Right ventricle myocardium inferior (tissue), 1 donor: ENCODE measurements at regions of chr19 and their contacts with region 1.

Region 1: DNA sequence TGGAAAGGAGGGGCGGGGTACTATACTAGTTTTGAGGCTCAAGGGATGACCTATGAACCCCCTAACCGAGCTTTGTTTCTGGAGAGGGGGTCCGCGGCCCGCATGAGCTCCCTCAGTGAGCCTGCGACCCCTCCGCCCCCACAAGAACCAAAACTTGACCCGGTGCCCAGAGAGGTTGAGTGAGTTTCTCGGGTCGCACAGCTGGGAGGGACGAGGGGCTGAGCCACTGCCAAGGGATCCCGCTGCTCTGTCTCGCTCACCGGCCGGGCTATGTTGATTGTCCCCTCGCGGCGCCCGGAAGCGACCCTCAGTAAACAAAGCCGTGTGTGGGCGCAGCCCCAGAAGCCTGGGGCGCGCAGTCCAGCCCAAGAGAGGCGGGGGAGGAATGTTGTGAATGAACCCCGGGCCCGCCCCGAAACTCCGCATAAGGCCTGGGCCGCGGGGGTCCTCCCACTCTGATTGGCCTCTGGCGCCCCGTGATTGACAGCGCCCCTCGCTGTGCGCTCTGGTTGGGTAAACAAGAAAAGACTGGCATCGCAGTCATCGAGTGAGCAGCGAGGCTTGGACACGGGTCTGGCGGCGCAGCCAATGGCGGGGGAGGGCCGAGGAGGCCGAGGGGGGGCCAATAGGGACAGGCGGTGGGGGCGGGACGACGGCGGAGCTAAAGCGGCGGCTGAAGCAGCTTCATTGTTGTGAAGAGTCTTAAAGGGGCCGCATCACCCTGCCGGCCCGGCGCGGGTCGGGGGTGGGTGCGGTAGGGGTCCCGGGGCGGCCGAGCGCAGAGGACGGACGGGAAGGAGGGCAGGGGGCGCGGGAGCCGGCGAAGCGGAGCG is at the start of gene ZSWIM4:
- DNase-seq: peak; percentile 100
- ATAC-seq: peak; percentile 97
- total RNA-seq, gene ZSWIM4: 2.1 TPM

Region 2: DNA sequence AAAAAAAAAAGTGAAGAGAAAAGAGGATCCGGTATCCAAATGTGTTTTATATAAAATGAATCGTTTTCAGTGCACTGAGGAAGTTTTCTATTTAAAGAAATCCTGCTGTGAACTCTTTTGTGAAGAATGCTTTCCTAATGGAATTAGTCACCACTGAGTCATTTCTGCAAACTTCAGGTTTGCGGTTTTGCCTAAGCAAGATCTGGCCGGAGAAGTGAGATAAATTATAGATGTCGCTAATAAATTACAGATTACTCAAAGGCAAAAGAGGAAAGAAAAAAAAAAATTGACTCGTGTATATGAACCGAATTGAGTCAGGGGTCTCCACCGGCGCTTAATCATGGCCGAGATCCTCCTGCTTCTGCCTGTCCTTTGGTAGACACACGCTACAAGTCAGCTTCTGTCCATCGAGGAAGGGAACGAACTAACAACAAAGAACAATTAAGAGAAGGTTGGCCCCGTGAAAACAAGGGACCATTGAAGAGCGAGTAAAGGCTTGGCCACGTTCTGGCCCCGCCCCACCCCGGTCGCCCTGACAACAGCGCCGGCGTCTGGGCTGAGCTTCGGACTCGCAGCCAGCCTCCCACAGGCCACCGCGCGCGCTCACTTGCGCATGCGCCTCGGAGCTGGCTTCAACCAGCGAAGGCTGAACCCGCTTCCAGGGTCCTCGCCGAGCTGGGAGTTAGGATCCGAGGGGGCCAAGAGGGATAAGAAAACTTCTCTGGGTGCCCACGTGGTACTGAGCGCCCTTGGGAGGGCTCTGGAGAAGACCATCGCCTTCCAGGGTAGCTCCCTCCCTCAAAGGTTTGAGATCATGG is 63.6 kb before region 1 on chr19:
- intact Hi-C with region 1: no loop called
- DNase-seq: peak; percentile 98
- ATAC-seq: peak; percentile 100

Region 3: DNA sequence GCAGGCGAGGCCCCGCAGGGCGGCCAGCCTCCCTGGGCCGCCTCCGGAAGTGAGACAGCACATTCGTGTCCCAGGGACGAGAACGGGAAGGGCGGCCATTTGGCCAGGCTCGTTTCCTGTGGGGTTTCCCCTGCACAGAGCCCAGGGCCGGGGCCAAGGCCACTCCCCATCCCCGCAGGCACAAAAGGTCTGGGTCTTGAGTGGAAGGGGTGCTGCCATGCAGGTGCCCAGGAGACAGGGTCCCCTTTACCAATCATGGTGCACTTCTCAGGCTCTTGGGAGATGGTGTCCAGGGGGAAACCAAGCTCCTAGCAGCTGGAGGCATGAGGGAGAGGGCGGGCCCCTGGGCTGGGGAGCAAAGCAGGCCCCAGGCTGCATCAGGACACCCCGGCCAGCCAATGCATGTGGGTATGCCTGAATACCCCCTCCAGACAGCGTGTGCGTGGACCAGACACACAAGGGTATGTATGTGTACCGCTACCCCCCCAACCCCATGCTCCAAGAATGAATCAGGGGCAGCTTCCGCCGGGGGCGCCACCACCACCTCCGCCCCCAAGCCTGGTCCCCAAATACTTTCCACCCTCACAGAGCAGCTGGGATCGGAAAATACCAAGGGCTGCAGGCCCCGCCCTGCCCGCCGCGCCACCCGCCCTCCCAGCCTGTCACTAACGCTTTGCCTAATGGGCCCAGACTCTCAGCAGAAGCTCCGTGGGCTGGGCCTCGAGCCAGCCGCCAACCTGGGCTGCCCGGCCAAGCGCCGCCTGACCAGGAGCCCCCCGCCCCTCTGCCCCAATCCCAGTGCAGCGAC is 44.4 kb after region 1 on chr19:
- intact Hi-C with region 1: loop called (anchors 5 kb)
- DNase-seq: peak; percentile 98
- ATAC-seq: peak; percentile 77